Psoas muscle (tissue), 8 donors: ENCODE measurements at regions of chr14 and their contacts with region 1.

Region 1: DNA sequence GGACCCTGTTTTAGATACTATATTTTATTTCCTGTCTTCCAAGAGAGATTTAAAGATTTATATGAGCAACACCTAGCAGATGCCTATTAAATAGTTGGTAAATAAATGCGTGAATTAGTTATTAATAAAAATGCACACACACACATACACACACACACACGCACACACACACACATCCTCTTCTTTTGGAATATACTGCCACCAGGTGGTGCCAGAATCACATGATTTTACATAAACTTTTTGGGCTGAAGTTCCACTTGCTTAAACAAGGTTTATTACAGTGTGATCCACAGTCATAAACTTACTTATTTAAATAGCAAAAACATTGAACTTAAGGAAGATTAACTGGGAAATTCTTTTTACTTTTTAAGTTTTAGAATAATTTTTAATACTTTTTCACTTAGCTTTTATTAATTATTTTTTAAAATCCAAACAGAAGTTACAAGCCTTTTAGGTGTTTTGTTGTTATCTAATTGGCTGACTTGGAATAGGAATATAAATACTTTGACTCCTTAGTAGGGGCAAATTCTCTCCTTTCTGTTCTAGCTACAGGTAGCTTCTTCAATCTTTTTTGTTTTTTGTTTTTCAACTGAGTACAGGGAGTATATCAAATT is 17.5 kb downstream of the RAD51B start:
- DNase-seq: no peak
- ATAC-seq: peak in 2 of 4 donors; percentile 38 to 46
- H3K4me3 ChIP-seq: no peak overlapping the region
- H3K27ac ChIP-seq: no peak overlapping the region
- H3K4me1 ChIP-seq: no peaks in the 10 kb centered on the region
- H3K27me3 ChIP-seq: no peaks in the 10 kb centered on the region
- CTCF ChIP-seq: peak; percentile 42

Region 2: DNA sequence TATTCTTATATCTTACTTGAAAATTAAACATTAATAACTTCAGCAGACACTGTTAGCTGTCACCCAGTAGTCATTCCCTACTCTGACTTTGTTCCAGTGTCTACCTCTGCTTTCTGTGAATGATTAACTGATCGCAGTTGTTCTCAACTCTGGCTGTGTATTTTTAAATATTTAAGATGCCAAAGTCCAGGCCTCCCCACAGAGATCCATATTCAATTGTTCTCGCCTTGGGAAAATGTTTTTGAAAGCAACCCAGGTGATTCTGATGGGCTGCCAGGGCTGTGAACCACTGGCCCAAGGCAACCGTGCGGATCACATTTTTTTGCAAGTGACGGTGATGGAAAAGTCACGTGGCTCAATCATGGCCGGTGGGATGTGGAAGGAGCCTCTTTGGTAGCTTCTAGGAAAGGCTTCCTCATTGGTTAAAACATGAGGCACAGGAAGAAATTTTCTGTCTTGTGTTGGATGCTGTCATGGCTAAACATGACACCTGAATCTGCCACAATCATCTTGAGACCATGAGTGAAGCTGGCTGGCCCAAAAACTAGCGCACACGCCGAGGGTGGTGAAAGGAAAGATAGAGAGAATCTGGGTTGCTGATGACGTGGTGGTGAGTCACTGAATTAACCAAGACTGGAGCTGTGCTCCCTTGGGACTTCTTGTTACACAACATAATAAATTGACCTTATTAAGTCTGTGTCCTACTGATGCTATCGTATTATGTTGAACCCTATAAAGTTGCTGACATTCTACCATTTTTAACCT is 98.2 kb before region 1 on chr14:
- intact Hi-C with region 1: no loop called
- DNase-seq: peak; percentile 71 to 81
- ATAC-seq: peak; percentile 80 to 90 (median 86)
- H3K4me3 ChIP-seq: no peak overlapping the region
- H3K27ac ChIP-seq: peak overlapping the region; percentile 67
- H3K4me1 ChIP-seq: peaks cover 36% of the 10 kb centered on the region
- H3K27me3 ChIP-seq: no peaks in the 10 kb centered on the region
- CTCF ChIP-seq: no peak

Region 3: DNA sequence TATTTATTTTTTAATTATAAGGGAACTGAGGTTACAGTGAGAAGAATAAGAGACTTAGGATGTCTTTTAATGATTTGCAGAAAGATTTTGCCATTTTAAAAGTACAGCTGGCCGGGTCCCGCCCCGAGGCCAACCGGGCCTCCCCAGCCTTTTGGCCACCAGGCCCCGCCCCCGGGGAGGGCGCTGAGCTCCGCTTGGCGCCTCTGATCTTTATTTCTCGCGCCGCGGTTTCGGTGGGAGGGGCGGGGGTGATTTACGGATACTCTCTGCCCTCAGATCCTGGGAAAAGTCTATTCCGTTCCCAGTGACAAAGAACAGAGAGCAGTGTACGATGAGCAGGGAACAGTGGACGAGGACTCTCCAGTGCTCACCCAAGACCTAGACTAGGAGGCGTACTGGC is 38.4 kb before region 1 on chr14:
- intact Hi-C with region 1: no loop called
- DNase-seq: no peak
- ATAC-seq: no peak
- H3K4me3 ChIP-seq: no peak overlapping the region
- H3K27ac ChIP-seq: no peak overlapping the region
- H3K4me1 ChIP-seq: no peaks in the 10 kb centered on the region
- H3K27me3 ChIP-seq: no peaks in the 10 kb centered on the region
- CTCF ChIP-seq: no peak

Region 4: GRCh38 chr14:68843471-68844209 is 1006.5 kb after region 1 on chr14:
- intact Hi-C with region 1: loop called in 1 of 2 experiments (anchors 5 kb)
- DNase-seq: peak; percentile 76 to 88
- ATAC-seq: peak; percentile 87 to 97 (median 92)
- H3K4me3 ChIP-seq: peak overlapping the region; percentile 60
- H3K27ac ChIP-seq: peak overlapping the region; percentile 16
- H3K4me1 ChIP-seq: peaks cover 4% of the 10 kb centered on the region
- H3K27me3 ChIP-seq: no peaks in the 10 kb centered on the region
- CTCF ChIP-seq: peak; percentile 92